SK-N-SH (cell line): ENCODE measurements at regions of chr7 and their contacts with region 1.

Region 1: DNA sequence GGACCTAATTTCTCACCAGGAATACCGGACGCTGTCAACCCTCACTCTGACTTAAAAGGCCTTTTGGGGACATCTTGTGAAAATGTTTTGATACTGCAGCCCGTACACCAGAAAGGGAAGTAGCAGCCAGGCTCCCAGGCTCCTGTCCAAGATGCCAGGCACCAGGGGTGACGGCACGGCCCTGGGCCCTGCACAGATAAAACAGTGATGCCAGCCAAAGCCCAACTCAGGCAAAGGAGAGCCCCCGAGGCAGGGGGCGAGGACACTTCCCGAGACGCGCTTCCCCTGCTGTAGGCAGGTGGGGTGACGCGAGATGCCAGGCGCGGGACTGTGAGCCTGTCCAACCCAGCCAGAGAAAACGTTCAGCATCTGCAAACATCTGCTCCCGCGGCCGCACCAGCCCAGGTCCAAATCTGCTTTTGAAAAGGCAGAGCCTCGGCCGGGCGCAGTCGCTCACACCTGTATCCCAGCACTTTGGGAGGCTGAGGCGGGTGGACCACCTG is 15.7 kb downstream of the ZFAND2A start:
- DNase-seq: peak; percentile 92
- H3K4me3 ChIP-seq: peak overlapping the region in 1 of 2 experiments; percentile 20; a peak in 3 of 4 replicates
- H3K27ac ChIP-seq: peak overlapping the region in 1 of 2 experiments; percentile 41; a peak in 2 of 4 replicates
- H3K4me1 ChIP-seq: peaks cover 0 to 22% of the 10 kb centered on the region in 2 experiments; a peak in 2 of 4 replicates
- H3K27me3 ChIP-seq: no peaks in the 10 kb centered on the region
- CTCF ChIP-seq: peak; percentile 70
- EP300 ChIP-seq: no peak; a peak in 1 of 4 replicates
- RAD21 ChIP-seq: peak; percentile 99

Region 2: DNA sequence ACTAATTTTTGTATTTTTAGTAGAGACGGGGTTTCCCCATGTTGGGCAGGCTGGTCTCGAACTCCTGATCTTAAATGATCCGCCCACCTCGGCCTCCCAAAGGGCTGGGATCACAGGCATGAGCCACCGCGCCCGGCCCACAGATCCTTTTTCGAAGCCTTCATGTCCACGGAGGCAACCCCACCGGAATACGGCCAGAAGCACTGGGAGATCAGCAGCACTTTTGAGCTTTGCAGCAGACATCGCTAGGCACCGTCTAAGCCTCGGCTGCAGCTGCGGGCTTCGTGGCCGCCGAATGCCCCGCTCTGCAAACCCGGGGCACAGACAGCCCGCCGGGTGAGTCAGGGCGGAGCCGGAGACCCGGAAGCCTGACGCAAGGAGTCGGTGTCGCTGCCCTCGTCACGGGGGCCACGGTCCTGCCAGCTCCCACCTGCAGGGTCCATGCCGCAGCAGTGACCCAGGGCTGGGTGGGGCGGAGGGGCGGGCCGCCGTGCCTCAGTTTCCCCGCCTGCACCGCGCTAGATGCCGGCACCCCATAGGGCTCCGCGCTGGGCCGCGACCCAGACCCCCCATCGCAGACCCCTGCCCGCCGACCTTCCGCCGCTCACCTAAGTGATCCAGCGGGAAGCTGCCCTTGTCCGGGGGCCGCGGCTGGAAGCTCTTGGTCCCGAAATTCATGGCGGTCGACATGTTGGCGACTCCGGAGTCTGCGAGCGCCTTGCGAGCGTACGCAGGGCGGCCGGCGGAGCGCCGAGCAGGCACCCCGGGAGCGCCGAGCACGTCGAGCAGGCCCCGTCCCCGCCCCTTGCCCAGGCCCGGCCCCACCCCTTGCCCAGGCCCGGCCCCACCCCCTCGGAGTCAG is 169.3 kb before region 1 on chr7 and contains the start of gene COX19:
- CTCF ChIA-PET with region 1: interaction called, 23 read pairs
- POLR2A ChIA-PET with region 1: no interaction called
- DNase-seq: peak; percentile 100
- H3K4me3 ChIP-seq: peak within 1 kb of the TSS; percentile 75 to 83
- H3K27ac ChIP-seq: peak within 1 kb of the TSS; percentile 79 to 91
- H3K4me1 ChIP-seq: peaks cover 6 to 12% of the 10 kb centered on the region in 2 experiments; a peak in 2 of 4 replicates
- H3K27me3 ChIP-seq: no peaks in the 10 kb centered on the region
- CTCF ChIP-seq: no peak
- EP300 ChIP-seq: no peak
- RAD21 ChIP-seq: no peak
- polyA plus RNA-seq, gene COX19: 7.6 TPM in 2 replicates

Region 3: DNA sequence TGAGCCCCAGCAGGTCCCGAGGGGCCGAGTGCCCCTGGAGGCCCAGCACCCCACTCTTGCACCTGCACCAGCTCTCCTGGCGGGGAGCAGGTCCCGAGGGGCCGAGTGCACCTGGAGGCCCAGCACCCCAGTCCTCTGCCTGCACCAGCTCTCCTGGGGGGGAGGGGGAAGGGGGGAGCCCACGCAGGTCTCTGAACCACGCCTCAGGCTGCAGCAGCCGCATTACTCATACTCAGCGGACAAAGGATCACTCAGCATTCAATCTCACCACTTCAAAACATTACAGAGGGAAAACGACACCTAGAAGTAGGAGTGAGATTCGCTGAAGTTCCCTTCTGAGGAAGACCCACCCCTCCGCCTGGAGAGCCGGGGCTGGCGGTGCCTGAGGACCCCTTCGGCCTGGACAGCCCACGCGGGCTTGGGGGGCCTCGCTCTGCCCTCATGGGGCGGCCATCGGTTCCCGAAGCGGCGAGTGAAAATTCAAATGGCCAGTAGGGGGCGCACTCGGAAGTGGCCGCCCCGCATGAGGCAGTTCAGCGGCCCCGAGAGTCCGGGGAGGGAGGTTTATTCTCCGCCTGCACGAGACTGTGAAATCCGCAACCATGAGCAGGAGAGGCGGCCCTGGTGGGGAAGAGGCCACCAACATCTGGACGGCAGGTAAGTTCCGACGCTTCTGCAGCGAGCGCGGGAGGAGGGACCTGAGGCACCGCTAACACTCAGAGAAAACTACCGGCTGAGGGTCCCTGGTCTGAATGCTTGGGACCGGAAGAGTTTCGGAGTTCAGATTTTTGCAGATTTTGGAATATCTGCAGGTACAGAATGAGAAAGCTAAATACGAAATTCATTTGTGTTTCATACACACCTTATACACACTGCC is 57.5 kb before region 1 on chr7:
- CTCF ChIA-PET with region 1: interaction called, 59 read pairs
- POLR2A ChIA-PET with region 1: no interaction called
- DNase-seq: peak; percentile 94
- H3K4me3 ChIP-seq: peak overlapping the region; percentile 33 to 62
- H3K27ac ChIP-seq: peak overlapping the region in 1 of 2 experiments; percentile 31; a peak in 1 of 4 replicates
- H3K4me1 ChIP-seq: peaks cover 25 to 44% of the 10 kb centered on the region in 2 experiments
- H3K27me3 ChIP-seq: no peaks in the 10 kb centered on the region
- CTCF ChIP-seq: peak; percentile 99
- EP300 ChIP-seq: no peak
- RAD21 ChIP-seq: peak; percentile 60

Region 4: DNA sequence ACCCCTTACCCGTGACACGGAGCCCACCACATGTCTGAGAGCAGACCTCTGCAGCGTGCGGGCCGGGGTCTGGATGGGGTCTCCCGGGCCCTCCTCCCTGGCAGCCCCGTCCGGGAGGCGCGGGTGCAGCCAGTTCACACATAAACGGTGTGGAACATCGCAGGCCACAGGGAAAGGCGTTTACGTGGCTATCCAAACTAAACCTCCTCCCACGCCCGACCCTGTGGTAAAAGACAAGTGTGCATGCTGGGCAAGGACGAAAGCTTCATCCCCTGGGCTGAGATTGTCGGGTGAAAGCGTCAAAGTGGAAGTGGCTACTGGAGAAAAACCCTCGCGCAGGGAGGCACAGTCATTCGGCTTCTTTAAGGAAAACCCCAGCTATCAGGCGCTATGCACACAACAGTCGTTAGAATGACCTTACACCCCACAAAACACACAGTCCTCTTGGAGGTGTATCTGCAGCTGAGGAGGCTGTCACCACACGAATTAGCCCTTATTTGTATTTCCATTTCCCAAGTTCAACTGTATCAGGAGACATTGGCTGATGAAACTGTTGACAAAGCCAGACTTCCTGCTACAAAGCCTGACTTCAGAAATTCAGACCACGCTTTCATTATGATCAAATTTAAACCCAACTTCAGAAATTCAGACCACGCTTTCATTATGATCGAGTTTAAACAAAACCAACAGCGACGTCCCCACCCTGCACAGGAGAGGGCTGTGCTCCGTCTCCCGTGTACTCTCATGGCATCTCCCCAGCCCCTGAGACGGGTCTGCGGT is 41.1 kb before region 1 on chr7:
- CTCF ChIA-PET with region 1: no interaction called
- POLR2A ChIA-PET with region 1: no interaction called
- DNase-seq: no peak
- H3K4me3 ChIP-seq: no peak overlapping the region
- H3K27ac ChIP-seq: no peak overlapping the region
- H3K4me1 ChIP-seq: peaks cover 6 to 22% of the 10 kb centered on the region in 2 experiments; a peak in 2 of 4 replicates
- H3K27me3 ChIP-seq: no peaks in the 10 kb centered on the region
- CTCF ChIP-seq: no peak
- EP300 ChIP-seq: no peak
- RAD21 ChIP-seq: no peak

Region 5: GRCh38 chr7:1123715-1124114 is 20.6 kb before region 1 on chr7:
- CTCF ChIA-PET with region 1: interaction called, 31 read pairs
- POLR2A ChIA-PET with region 1: no interaction called
- DNase-seq: peak; percentile 79
- H3K4me3 ChIP-seq: no peak overlapping the region
- H3K27ac ChIP-seq: no peak overlapping the region
- H3K4me1 ChIP-seq: 0 out of 4 replicates have a peak, but pooled peaks cover 0 to 8% of the 10 kb centered on the region in 2 experiments
- H3K27me3 ChIP-seq: no peaks in the 10 kb centered on the region
- CTCF ChIP-seq: peak; percentile 49
- EP300 ChIP-seq: no peak
- RAD21 ChIP-seq: peak; percentile 61

Region 6: DNA sequence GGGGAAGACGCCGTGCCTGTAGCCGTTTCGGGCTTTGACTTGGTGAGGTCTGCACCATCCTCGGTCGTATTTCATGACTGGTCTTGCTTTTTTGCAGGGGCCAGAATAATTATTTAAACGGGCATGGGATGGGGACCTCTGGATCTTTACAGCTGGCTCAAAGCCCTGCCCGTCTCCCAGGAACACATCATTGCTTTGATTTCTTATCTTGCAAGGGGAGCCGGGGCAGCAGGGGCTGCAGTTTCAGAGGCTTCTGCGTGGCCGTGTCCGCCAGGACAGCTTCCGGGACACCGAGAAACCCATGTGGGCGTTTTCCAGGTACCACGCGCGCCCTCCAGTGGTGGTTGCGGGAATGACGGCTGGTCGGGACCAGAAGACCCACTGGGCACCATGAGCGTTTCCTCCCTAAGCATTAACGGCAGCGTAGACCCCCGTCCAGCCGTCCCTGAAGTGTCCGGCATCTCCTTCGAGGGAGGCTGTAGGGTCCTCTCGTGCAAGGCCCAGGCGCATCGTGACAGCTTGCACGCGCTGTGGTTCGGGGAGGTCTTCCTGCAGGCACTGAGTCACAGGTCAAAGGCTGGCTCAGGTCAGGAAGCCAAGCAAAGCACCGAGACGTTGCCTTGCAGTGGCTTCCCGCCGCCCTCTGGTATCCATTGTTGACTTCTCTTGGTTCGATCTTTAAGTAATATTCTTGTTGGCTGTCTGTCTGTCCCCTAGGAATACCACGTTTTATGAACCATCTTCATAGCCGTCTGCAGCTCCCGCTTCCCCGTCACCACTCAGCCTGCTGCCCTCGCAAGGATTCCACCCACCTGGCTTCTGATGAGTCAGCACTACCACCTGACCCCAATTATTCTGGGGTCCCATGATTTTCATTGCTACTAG is 31.9 kb after region 1 on chr7:
- CTCF ChIA-PET with region 1: interaction called, 23 read pairs
- POLR2A ChIA-PET with region 1: no interaction called
- DNase-seq: peak; percentile 93
- H3K4me3 ChIP-seq: peak overlapping the region; percentile 4 to 36; a peak in 2 of 4 replicates
- H3K27ac ChIP-seq: no peak overlapping the region
- H3K4me1 ChIP-seq: peaks cover 0 to 2% of the 10 kb centered on the region in 2 experiments; a peak in 1 of 4 replicates
- H3K27me3 ChIP-seq: no peaks in the 10 kb centered on the region
- CTCF ChIP-seq: peak; percentile 91
- EP300 ChIP-seq: no peak
- RAD21 ChIP-seq: peak; percentile 74

Region 7: GRCh38 chr7:1297017-1297960 is 153.0 kb after region 1 on chr7:
- CTCF ChIA-PET with region 1: no interaction called
- POLR2A ChIA-PET with region 1: no interaction called
- DNase-seq: peak; percentile 46
- H3K4me3 ChIP-seq: no peak overlapping the region
- H3K27ac ChIP-seq: no peak overlapping the region
- H3K4me1 ChIP-seq: no peaks in the 10 kb centered on the region
- H3K27me3 ChIP-seq: peaks cover 89% of the 10 kb centered on the region
- CTCF ChIP-seq: no peak
- EP300 ChIP-seq: no peak
- RAD21 ChIP-seq: no peak

Region 8: GRCh38 chr7:1340461-1341360 is 196.4 kb after region 1 on chr7:
- CTCF ChIA-PET with region 1: no interaction called
- POLR2A ChIA-PET with region 1: no interaction called
- DNase-seq: no peak
- H3K4me3 ChIP-seq: no peak overlapping the region
- H3K27ac ChIP-seq: no peak overlapping the region
- H3K4me1 ChIP-seq: no peaks in the 10 kb centered on the region
- H3K27me3 ChIP-seq: peaks cover 88% of the 10 kb centered on the region
- CTCF ChIP-seq: no peak
- EP300 ChIP-seq: no peak
- RAD21 ChIP-seq: no peak